IMR-90 (cell line): ENCODE measurements at regions of chr1 and their contacts with region 1.

Region 1: DNA sequence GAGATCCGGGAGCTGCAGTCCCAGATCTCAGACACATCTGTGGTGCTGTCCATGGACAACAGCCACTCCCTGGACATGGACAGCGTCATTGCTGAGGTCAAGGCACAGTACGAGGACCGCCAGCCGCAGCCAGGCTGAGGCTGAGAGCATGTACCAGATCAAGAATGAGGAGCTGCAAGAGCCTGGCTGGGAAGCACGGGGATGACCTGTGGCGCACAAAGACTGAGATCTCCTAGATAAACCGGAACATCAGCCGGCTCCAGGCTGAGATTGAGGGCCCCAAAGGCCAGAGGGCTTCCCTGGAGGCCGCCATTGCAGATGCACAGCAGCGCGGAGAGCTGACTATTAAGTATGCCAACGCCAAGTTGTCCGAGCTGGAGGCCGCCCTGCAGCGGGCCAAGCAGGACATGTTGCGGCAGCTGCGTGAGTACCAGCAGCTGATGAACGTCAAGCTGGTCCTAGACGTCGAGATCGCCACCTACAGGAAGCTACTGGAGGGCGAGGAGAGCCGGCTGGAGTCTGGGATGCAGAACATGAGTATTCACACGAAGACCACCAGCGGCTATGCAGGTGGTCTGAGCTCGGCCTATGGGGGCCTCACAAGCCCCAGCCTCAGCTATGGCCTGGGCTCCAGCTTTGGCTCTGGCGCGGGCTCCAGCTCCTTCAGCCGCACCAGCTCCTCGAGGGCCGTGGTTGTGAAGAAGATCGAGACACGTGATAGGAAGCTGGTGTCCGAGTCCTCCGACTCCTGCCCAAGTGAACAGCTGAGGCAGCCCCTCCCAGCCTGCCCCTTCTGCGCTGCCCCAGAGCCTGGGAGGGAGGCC is 25.5 kb downstream of the ETV3L start:
- DNase-seq: peak; percentile 68
- ATAC-seq: peak; percentile 92
- H3K4me3 ChIP-seq: no peak overlapping the region
- H3K27ac ChIP-seq: no peak overlapping the region
- H3K4me1 ChIP-seq: no peaks in the 10 kb centered on the region
- H3K27me3 ChIP-seq: peaks cover 22% of the 10 kb centered on the region
- CTCF ChIP-seq: peak; percentile 59
- POLR2A ChIP-seq: no peak
- RAD21 ChIP-seq: peak; percentile 59

Region 2: GRCh38 chr1:156898161-156898566 is 176.0 kb before region 1 on chr1:
- CTCF ChIA-PET with region 1: no interaction called
- POLR2A ChIA-PET with region 1: no interaction called
- dilution Hi-C with region 1: no loop called
- in situ Hi-C with region 1: no loop called
- intact Hi-C with region 1: no loop called
- DNase-seq: peak; percentile 72
- ATAC-seq: peak; percentile 46
- H3K4me3 ChIP-seq: no peak overlapping the region
- H3K27ac ChIP-seq: peak overlapping the region; percentile 77
- H3K4me1 ChIP-seq: peaks cover 50% of the 10 kb centered on the region
- H3K27me3 ChIP-seq: no peaks in the 10 kb centered on the region
- CTCF ChIP-seq: no peak
- POLR2A ChIP-seq: no peak
- RAD21 ChIP-seq: no peak

Region 3: GRCh38 chr1:156959414-156959813 is 114.7 kb before region 1 on chr1:
- CTCF ChIA-PET with region 1: no interaction called
- POLR2A ChIA-PET with region 1: no interaction called
- dilution Hi-C with region 1: no loop called
- in situ Hi-C with region 1: no loop called
- intact Hi-C with region 1: loop called (anchors 1 kb)
- DNase-seq: peak; percentile 77
- ATAC-seq: peak; percentile 95
- H3K4me3 ChIP-seq: no peak overlapping the region
- H3K27ac ChIP-seq: no peak overlapping the region
- H3K4me1 ChIP-seq: peaks cover 3% of the 10 kb centered on the region
- H3K27me3 ChIP-seq: no peaks in the 10 kb centered on the region
- CTCF ChIP-seq: no peak
- POLR2A ChIP-seq: no peak
- RAD21 ChIP-seq: no peak

Region 4: DNA sequence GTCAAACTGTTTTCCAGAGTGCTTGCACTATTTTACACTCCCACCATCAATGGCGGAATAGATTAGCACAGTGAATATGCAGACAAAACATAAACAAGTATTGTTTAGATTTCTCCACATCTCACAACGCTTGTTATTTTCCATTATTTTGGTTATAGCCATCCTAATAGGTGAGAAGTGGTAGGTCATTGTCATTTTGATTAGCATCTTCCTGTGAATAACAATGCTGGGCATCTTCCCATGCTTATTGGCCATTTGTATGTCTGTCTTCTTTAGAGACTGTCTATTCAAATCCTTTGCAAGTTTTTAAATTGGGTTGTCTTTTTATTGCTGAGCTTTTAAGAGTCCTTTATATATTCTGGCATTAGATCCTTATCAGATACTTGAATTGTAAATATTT is 99.1 kb before region 1 on chr1:
- CTCF ChIA-PET with region 1: no interaction called
- POLR2A ChIA-PET with region 1: no interaction called
- dilution Hi-C with region 1: no loop called
- in situ Hi-C with region 1: no loop called
- intact Hi-C with region 1: loop called (anchors 5 kb)
- DNase-seq: no peak
- ATAC-seq: no peak
- H3K4me3 ChIP-seq: no peak overlapping the region
- H3K27ac ChIP-seq: no peak overlapping the region
- H3K4me1 ChIP-seq: no peaks in the 10 kb centered on the region
- H3K27me3 ChIP-seq: no peaks in the 10 kb centered on the region
- CTCF ChIP-seq: no peak
- POLR2A ChIP-seq: no peak
- RAD21 ChIP-seq: no peak

Region 5: GRCh38 chr1:156993446-156994147 is 80.6 kb before region 1 on chr1:
- CTCF ChIA-PET with region 1: no interaction called
- POLR2A ChIA-PET with region 1: no interaction called
- dilution Hi-C with region 1: no loop called
- in situ Hi-C with region 1: no loop called
- intact Hi-C with region 1: loop called (anchors 5 kb)
- DNase-seq: peak; percentile 23
- ATAC-seq: no peak
- H3K4me3 ChIP-seq: no peak overlapping the region
- H3K27ac ChIP-seq: no peak overlapping the region
- H3K4me1 ChIP-seq: no peaks in the 10 kb centered on the region
- H3K27me3 ChIP-seq: no peaks in the 10 kb centered on the region
- CTCF ChIP-seq: no peak
- POLR2A ChIP-seq: no peak
- RAD21 ChIP-seq: no peak

Region 6: GRCh38 chr1:157034137-157034800 is 39.9 kb before region 1 on chr1:
- CTCF ChIA-PET with region 1: no interaction called
- POLR2A ChIA-PET with region 1: no interaction called
- dilution Hi-C with region 1: no loop called
- in situ Hi-C with region 1: no loop called
- intact Hi-C with region 1: no loop called
- DNase-seq: peak; percentile 22
- ATAC-seq: no peak
- H3K4me3 ChIP-seq: no peak overlapping the region
- H3K27ac ChIP-seq: no peak overlapping the region
- H3K4me1 ChIP-seq: no peaks in the 10 kb centered on the region
- H3K27me3 ChIP-seq: no peaks in the 10 kb centered on the region
- CTCF ChIP-seq: no peak
- POLR2A ChIP-seq: no peak
- RAD21 ChIP-seq: no peak

Region 7: DNA sequence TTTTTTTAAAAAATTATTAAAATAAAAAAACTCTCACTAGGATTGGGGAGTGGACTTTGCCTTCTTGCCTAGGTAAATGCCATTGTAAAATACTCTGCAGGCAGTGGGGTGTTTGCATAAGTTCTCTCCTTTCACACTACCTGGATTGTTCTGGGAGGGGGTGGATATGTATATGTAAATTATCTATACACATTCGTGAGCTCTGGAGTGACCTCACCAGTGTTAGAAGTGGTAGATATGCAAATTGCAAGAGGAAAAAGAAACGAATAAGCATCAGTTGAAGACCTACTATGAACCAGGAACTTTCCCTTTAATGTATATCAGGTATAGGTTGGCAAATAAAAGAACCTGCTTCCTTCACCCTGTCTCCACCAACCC is 27.1 kb before region 1 on chr1:
- CTCF ChIA-PET with region 1: interaction called, 4 read pairs
- POLR2A ChIA-PET with region 1: no interaction called
- dilution Hi-C with region 1: no loop called
- in situ Hi-C with region 1: no loop called
- intact Hi-C with region 1: loop called (anchors 1 kb)
- DNase-seq: no peak
- ATAC-seq: no peak
- H3K4me3 ChIP-seq: no peak overlapping the region
- H3K27ac ChIP-seq: no peak overlapping the region
- H3K4me1 ChIP-seq: peaks cover 10% of the 10 kb centered on the region
- H3K27me3 ChIP-seq: peaks cover 12% of the 10 kb centered on the region
- CTCF ChIP-seq: no peak
- POLR2A ChIP-seq: no peak
- RAD21 ChIP-seq: no peak